ENCODE measurements at regions of chr20 and their contacts with region 1.

Region 1: GRCh38 chr20:51541189-51542032 is 1.1 kb downstream of the NFATC2 start:
- DNase-seq: no peak
- ATAC-seq: peak; percentile 60
- H3K4me3 ChIP-seq: no peak overlapping the region
- H3K27ac ChIP-seq: 0 out of 2 replicates have a peak overlapping the region, but pooled peaks have one; percentile 34
- H3K4me1 ChIP-seq: peaks cover 21% of the 10 kb centered on the region
- H3K27me3 ChIP-seq: no peaks in the 10 kb centered on the region
- CTCF ChIP-seq: no peak

Region 2: DNA sequence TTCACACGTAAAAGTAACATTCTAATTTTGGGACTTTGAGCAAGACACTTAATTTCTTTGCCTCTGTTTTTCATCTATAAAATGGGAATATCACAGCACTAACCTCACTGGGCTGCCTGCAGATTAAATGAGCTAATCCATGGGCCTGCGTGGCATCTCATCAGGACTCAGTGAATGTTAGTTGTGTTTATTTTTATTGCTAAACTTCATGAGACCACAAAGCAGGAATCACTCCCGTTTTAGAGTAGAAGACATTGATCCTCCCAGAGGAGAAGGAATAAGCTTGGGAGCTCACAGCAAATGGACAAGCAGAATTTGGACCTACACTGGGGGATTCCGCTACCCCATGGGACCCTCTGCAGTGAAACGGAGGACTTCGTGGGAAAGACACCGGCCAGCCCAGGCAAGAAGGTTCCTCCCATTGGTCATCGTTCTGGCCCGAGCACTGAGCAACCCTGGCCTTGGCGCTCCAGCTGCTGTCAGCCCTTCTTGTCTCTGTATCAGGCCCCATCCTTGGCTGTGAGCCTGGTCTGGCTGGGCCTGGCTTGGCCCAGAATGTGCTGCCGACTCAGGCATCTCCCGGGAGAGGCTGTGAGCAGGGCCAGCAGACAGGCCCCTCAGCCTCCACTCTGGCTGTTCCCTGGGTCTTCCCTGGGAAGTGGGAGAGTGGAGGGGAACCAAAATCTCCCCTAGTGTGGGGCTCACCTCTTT is 78.7 kb before region 1 on chr20:
- CTCF ChIA-PET with region 1: no interaction called
- POLR2A ChIA-PET with region 1: interaction called, 11 read pairs
- in situ Hi-C with region 1: no loop called
- intact Hi-C with region 1: no loop called
- DNase-seq: no peak
- ATAC-seq: no peak
- H3K4me3 ChIP-seq: no peak overlapping the region
- H3K27ac ChIP-seq: peak overlapping the region; percentile 70; the same call in 1 of the 2 replicates
- H3K4me1 ChIP-seq: peaks cover 38% of the 10 kb centered on the region
- H3K27me3 ChIP-seq: no peaks in the 10 kb centered on the region
- CTCF ChIP-seq: no peak

Region 3: GRCh38 chr20:51512645-51513044 is 28.8 kb before region 1 on chr20:
- CTCF ChIA-PET with region 1: interaction called, 10 read pairs
- POLR2A ChIA-PET with region 1: no interaction called
- in situ Hi-C with region 1: no loop called
- intact Hi-C with region 1: no loop called
- DNase-seq: no peak
- ATAC-seq: no peak
- H3K4me3 ChIP-seq: no peak overlapping the region
- H3K27ac ChIP-seq: no peak overlapping the region
- H3K4me1 ChIP-seq: peaks cover 11% of the 10 kb centered on the region; the same call in 1 of the 2 replicates
- H3K27me3 ChIP-seq: no peaks in the 10 kb centered on the region
- CTCF ChIP-seq: no peak

Region 4: DNA sequence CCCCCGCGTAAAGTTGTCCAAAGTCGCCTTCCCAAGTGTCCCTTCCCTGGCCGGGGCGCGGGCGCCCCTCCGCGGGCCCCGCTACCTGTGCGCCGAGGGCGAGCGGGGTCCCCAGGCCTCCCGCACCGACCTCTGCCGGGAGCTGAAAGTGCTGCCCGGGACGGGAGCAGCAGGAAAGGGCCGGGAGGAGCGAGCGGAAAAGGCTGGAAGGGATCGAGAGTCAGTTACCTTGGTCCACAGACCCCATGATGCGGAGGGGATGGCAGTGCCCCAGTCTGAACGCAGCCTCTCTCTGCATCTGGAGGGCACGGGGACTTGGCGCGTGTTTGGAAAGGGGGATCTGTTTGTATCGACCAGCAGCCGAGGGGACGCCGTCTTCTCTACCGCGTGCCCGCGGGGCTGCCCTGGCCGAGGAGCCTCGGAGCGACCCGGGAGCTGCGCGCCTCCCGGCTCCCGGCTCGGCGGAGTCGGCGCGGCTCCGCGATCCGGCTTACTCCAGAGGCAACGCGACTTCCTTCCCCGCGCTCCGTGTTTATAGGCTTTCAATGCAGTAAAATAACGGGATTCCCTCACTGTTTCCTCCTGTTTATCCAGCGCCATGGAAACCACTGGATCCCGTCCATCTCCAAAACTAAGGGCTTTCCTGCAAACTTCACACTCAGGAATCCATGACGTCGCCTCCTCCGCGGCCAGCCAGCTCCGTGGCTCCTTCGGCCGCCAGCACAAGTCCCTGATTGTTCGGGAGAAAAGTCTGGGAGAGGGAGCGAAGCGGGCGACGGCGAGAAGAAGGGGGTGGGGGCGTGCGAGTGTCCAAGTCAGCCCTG is 21.1 kb after region 1 on chr20:
- CTCF ChIA-PET with region 1: no interaction called
- POLR2A ChIA-PET with region 1: interaction called, 13 read pairs
- in situ Hi-C with region 1: no loop called
- intact Hi-C with region 1: no loop called
- DNase-seq: peak; percentile 55
- ATAC-seq: peak; percentile 68
- H3K4me3 ChIP-seq: peak overlapping the region; percentile 53 to 92
- H3K27ac ChIP-seq: peak overlapping the region; percentile 93
- H3K4me1 ChIP-seq: peaks cover 36% of the 10 kb centered on the region
- H3K27me3 ChIP-seq: no peaks in the 10 kb centered on the region
- CTCF ChIP-seq: peak; percentile 73

Measured in Panc1 (cell line).